HepG2 (cell line): ENCODE measurements at regions of chr17 and their contacts with region 1.

Region 1: DNA sequence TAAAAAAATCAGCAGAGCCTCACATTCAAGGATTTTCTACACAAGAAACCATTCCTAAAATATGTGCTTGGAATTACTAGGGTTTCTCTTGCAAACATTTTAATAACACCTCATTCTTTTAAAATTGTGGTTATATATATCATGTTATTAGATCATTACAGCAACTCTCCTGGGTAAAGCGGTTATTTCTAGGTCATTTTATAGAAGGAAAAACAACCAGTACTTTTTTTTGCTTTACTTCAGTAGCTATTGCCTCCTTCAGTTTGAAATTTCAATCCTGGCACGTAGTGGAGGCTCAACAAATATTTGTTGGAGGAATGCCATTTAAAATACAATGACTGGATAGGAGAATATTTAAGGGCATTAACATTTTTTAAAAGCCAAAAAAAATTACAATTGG is 220.6 kb downstream of the CDRT15L2 start:
- DNase-seq: no peak
- ATAC-seq: no peak
- H3K4me3 ChIP-seq: no peak overlapping the region
- H3K27ac ChIP-seq: no peak overlapping the region
- H3K4me1 ChIP-seq: no peaks in the 10 kb centered on the region
- H3K27me3 ChIP-seq: no peaks in the 10 kb centered on the region
- CTCF ChIP-seq: no peak
- EP300 ChIP-seq: no peak
- POLR2A ChIP-seq: no peak
- RAD21 ChIP-seq: no peak

Region 2: GRCh38 chr17:20721171-20721570 is 79.0 kb before region 1 on chr17:
- CTCF ChIA-PET with region 1: no interaction called
- POLR2A ChIA-PET with region 1: no interaction called
- in situ Hi-C with region 1: no loop called
- intact Hi-C with region 1: no loop called
- DNase-seq: no peak
- ATAC-seq: no peak
- H3K4me3 ChIP-seq: no peak overlapping the region
- H3K27ac ChIP-seq: no peak overlapping the region
- H3K4me1 ChIP-seq: no peaks in the 10 kb centered on the region
- H3K27me3 ChIP-seq: no peaks in the 10 kb centered on the region
- CTCF ChIP-seq: no peak
- EP300 ChIP-seq: no peak
- POLR2A ChIP-seq: no peak
- RAD21 ChIP-seq: no peak

Region 3: GRCh38 chr17:20825539-20825938 is 25.4 kb after region 1 on chr17:
- CTCF ChIA-PET with region 1: no interaction called
- POLR2A ChIA-PET with region 1: no interaction called
- in situ Hi-C with region 1: no loop called
- intact Hi-C with region 1: no loop called
- DNase-seq: peak; percentile 57
- ATAC-seq: peak; percentile 62
- H3K4me3 ChIP-seq: no peak overlapping the region
- H3K27ac ChIP-seq: no peak overlapping the region
- H3K4me1 ChIP-seq: peaks cover 17% of the 10 kb centered on the region
- H3K27me3 ChIP-seq: no peaks in the 10 kb centered on the region
- CTCF ChIP-seq: no peak
- EP300 ChIP-seq: no peak
- POLR2A ChIP-seq: no peak
- RAD21 ChIP-seq: no peak

Region 4: DNA sequence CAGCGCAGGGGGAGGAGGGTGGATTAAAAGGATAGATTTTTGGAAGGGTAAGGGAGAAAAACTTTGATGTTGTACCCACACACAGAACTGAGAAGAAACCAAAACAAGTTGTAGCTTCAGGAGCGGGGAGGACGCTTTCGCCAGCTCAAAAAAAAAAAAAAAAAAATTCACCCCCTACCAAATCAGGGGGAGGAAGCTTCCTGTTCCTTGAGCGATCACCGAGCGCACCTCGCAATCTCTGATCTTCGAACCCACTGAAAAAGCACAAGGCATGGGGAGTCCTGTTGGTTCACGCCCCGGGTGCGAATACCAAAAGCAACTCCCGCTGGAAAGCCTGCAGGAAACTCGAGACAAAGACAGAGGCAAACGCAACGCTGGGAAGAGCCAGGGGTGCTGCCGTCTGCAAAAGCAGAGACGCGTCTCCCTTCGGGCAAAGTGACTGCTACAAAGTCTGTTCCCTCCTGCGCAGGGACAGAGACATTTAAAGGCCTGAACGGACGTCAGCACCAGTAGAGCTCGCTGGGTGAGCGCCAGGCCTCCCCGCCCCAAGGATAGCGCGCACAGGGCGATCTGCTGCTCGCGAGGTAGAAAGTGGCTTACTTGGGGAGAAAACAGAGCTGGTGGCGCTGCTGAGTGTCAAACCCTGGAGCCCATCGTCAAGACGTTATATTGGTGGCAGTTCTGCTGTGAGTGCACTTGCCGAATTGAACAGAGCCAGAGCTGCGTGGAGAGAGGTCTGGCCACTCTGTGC is 52.3 kb after region 1 on chr17:
- CTCF ChIA-PET with region 1: interaction called, 7 read pairs
- POLR2A ChIA-PET with region 1: no interaction called
- in situ Hi-C with region 1: no loop called
- intact Hi-C with region 1: loop called (anchors 5 kb)
- DNase-seq: no peak
- ATAC-seq: peak; percentile 57
- H3K4me3 ChIP-seq: no peak overlapping the region
- H3K27ac ChIP-seq: no peak overlapping the region
- H3K4me1 ChIP-seq: no peaks in the 10 kb centered on the region
- H3K27me3 ChIP-seq: no peaks in the 10 kb centered on the region
- CTCF ChIP-seq: no peak
- EP300 ChIP-seq: no peak
- POLR2A ChIP-seq: no peak
- RAD21 ChIP-seq: no peak

Region 5: GRCh38 chr17:21098934-21099689 is 299.0 kb after region 1 on chr17:
- CTCF ChIA-PET with region 1: no interaction called
- POLR2A ChIA-PET with region 1: no interaction called
- in situ Hi-C with region 1: no loop called
- intact Hi-C with region 1: loop called (anchors 5 kb)
- DNase-seq: peak; percentile 80
- ATAC-seq: peak; percentile 97
- H3K4me3 ChIP-seq: peak overlapping the region; percentile 55 to 79 (median 65)
- H3K27ac ChIP-seq: peak overlapping the region; percentile 42
- H3K4me1 ChIP-seq: peaks cover 25% of the 10 kb centered on the region
- H3K27me3 ChIP-seq: no peaks in the 10 kb centered on the region
- CTCF ChIP-seq: no peak
- EP300 ChIP-seq: peak in 1 of 2 experiments; percentile 99; a peak in 1 of 4 replicates
- POLR2A ChIP-seq: no peak
- RAD21 ChIP-seq: no peak